A673 (cell line): ENCODE measurements at regions of chr17 and their contacts with region 1.

Region 1: GRCh38 chr17:55067697-55068439 is 99.3 kb downstream of the STXBP4 start:
- DNase-seq: peak; percentile 37
- H3K4me3 ChIP-seq: no peak overlapping the region
- H3K27ac ChIP-seq: no peak overlapping the region
- H3K4me1 ChIP-seq: peaks cover 55% of the 10 kb centered on the region
- H3K27me3 ChIP-seq: no peaks in the 10 kb centered on the region
- CTCF ChIP-seq: no peak

Region 2: DNA sequence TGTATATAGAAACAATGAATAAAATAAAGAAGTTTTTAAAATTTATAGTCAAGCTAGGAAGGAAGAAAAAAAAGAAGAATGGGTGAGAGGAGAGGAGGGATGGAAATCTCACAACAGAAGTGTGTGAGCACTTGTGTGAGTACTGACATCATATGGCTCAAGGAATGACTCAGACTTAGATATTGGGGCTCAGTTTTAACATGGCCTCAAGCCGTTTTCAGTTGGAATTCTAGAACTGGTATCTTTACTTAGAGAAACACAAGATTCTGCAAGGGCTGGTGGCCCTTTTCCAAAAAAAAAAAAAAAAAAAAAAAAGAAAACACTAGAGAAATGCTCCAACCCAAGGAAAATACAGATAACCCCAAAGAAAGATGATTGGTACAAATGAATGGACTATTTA is 44.2 kb before region 1 on chr17:
- CTCF ChIA-PET with region 1: no interaction called
- POLR2A ChIA-PET with region 1: no interaction called
- intact Hi-C with region 1: no loop called
- DNase-seq: no peak
- H3K4me3 ChIP-seq: no peak overlapping the region
- H3K27ac ChIP-seq: no peak overlapping the region
- H3K4me1 ChIP-seq: no peaks in the 10 kb centered on the region
- H3K27me3 ChIP-seq: no peaks in the 10 kb centered on the region
- CTCF ChIP-seq: no peak

Region 3: DNA sequence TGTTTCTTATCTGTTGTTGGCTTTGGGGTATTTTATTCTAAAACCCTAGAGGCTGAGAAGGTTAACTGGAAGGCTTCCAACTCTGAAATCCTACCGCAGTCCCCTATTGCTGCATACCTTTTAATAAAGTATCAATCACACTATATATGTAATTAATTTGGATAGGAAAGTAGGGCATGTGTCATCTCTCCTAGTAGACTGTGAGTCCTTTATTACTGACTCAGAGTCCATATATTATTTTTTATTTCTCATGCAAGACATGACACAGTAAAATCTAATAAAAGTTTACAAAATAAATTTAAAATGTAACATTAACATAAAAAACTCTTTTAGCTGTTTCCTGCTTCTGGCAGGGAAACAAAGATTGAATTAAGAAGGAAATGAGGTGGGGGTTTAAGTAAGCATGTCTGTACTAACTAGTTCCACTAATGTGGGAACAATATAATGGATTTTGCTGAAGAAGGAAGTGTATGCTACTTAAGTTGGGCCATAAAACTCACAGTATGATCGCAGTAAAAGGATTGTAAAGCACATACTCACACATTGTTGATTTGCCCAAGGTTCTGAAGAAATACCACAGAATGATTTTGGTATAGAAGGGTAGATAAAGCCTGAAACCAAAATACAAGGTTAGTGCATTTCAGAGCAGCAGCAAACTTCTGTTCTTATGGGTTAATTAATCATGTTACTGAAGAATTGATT is 99.3 kb after region 1 on chr17:
- CTCF ChIA-PET with region 1: no interaction called
- POLR2A ChIA-PET with region 1: interaction called, 4 read pairs
- intact Hi-C with region 1: loop called (anchors 1 kb)
- DNase-seq: peak; percentile 98
- H3K4me3 ChIP-seq: no peak overlapping the region
- H3K27ac ChIP-seq: peak overlapping the region; percentile 72
- H3K4me1 ChIP-seq: peaks cover 65% of the 10 kb centered on the region
- H3K27me3 ChIP-seq: no peaks in the 10 kb centered on the region
- CTCF ChIP-seq: no peak

Region 4: DNA sequence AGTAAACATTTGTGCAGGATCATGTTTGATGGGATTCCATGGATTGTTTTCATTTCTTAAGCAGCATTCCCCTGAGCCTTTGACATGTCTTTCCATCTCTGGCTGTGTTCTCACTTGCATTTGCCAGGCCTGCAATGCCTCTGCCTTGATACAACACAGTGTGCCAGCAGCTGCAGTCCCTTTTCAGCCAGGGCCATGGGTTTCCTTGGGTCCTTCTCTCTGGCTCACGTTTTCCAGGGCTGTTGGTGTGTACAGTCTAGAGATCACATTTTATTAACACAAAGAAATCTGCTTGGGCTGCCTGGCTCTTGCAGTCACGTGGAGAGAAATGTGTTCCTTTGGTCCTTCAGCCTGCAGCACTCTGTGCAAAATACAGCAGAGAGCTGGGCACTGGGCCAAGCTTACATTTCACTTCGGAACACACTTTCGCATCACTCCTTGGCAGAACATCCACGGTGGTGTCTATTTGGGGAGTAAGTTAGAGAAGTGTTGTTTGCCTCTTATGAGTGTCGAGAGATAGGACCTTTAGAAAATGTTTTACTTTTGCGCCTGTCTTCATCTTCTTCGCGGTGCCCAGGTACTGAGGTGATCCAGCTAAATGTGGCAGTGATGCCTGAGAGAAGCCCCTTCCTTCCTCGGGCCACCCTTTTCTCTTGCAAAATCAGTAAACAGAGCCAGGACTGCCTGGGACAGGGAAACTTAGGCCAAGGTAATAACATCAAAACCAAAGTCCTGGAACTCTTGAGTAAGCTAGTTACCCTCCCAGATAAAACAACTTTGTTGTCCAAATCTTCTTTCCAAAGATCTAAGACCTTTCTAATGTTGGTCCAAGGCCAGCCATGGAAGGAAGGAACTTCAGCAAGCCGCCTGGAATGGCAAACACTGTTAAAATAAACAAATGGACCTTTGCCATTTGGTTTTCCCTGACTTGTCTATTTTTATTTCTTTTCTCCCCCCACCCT is 217.8 kb after region 1 on chr17:
- CTCF ChIA-PET with region 1: no interaction called
- POLR2A ChIA-PET with region 1: no interaction called
- intact Hi-C with region 1: loop called (anchors 5 kb)
- DNase-seq: no peak
- H3K4me3 ChIP-seq: no peak overlapping the region
- H3K27ac ChIP-seq: no peak overlapping the region
- H3K4me1 ChIP-seq: no peaks in the 10 kb centered on the region
- H3K27me3 ChIP-seq: no peaks in the 10 kb centered on the region
- CTCF ChIP-seq: no peak

Region 5: GRCh38 chr17:55366020-55366481 is 298.2 kb after region 1 on chr17:
- CTCF ChIA-PET with region 1: no interaction called
- POLR2A ChIA-PET with region 1: no interaction called
- intact Hi-C with region 1: no loop called
- DNase-seq: no peak
- H3K4me3 ChIP-seq: no peak overlapping the region
- H3K27ac ChIP-seq: no peak overlapping the region
- H3K4me1 ChIP-seq: no peaks in the 10 kb centered on the region
- H3K27me3 ChIP-seq: no peaks in the 10 kb centered on the region
- CTCF ChIP-seq: no peak

Region 6: GRCh38 chr17:55437159-55437605 is 369.3 kb after region 1 on chr17:
- CTCF ChIA-PET with region 1: no interaction called
- POLR2A ChIA-PET with region 1: no interaction called
- intact Hi-C with region 1: loop called (anchors 5 kb)
- DNase-seq: peak; percentile 98
- H3K4me3 ChIP-seq: peak overlapping the region; percentile 6
- H3K27ac ChIP-seq: peak overlapping the region; percentile 47
- H3K4me1 ChIP-seq: peaks cover 30% of the 10 kb centered on the region
- H3K27me3 ChIP-seq: no peaks in the 10 kb centered on the region
- CTCF ChIP-seq: no peak